ENCODE measurements at regions of chr7 and their contacts with region 1.

Region 1: GRCh38 chr7:150448789-150449147 is 1.7 kb upstream of the GIMAP8 start:
- DNase-seq: peak; percentile 65
- H3K4me3 ChIP-seq: no peak overlapping the region
- H3K27ac ChIP-seq: no peak overlapping the region
- H3K4me1 ChIP-seq: no peaks in the 10 kb centered on the region
- CTCF ChIP-seq: peak; percentile 93

Region 2: DNA sequence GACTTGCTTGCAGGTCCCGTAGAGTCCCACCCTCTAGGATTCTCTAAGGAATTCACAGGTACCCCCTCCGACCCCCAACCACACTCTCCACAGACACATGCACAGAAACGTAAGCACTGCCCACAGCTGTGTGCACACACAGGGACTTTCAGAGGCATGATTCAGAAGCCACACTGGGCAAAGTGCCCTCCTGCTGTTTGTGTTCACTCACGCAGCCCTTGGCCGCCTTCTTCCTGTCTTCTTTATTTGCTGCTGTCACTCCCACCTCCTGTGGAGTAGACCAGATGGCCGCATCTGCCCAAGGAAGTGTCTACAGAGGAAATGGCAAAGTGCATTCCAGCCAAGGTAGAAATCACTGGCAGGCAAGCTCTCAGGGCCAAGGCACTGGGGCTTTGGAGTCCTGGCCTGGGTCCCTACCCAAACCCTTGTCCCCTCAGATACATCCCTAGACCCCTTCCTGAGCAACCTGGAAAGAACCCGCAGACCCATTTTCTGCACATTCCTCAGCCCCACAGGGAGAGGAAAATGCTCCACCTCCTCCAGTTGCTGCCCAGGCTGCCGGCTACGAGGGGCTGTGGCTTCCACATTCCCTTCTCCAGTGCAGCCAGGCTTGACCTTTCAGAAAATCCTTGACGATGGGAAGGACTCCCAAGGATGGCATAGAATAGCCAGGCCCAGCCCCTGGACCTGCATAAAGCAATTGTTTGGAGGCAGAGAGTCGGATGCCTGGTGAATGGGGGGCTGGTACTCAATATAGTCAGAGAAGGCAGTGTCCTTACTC is 19.9 kb before region 1 on chr7:
- CTCF ChIA-PET with region 1: no interaction called
- POLR2A ChIA-PET with region 1: no interaction called
- intact Hi-C with region 1: no loop called
- DNase-seq: no peak
- H3K4me3 ChIP-seq: no peak overlapping the region
- H3K27ac ChIP-seq: no peak overlapping the region
- H3K4me1 ChIP-seq: no peaks in the 10 kb centered on the region
- CTCF ChIP-seq: no peak

Region 3: DNA sequence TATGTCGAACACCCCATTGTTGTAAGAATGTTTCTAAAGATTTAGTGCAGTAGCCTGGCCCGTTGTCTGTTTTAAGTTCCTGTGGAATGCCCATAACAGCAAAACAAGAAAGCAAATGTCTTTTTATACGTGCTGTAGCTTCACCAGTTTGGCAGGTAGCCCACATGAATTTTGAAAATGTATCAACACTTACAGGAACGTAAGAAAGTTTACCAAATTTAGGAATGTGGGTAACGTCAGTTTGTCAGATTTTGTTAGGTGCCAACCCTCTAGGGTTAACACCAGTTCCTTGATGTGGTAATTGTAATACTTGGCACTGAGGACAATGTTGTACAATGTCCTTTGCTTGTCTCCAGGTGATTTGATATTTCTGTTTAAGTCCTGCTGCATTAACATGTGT is 115.2 kb after region 1 on chr7:
- CTCF ChIA-PET with region 1: no interaction called
- POLR2A ChIA-PET with region 1: no interaction called
- intact Hi-C with region 1: loop called (anchors 5 kb)
- DNase-seq: no peak
- H3K4me3 ChIP-seq: no peak overlapping the region
- H3K27ac ChIP-seq: no peak overlapping the region
- H3K4me1 ChIP-seq: no peaks in the 10 kb centered on the region
- CTCF ChIP-seq: no peak

Region 4: GRCh38 chr7:150756858-150757257 is 308.1 kb after region 1 on chr7:
- CTCF ChIA-PET with region 1: no interaction called
- POLR2A ChIA-PET with region 1: no interaction called
- intact Hi-C with region 1: loop called (anchors 5 kb)
- DNase-seq: no peak
- H3K4me3 ChIP-seq: no peak overlapping the region
- H3K27ac ChIP-seq: no peak overlapping the region
- H3K4me1 ChIP-seq: no peaks in the 10 kb centered on the region
- CTCF ChIP-seq: peak; percentile 66

Measured in OCI-LY7 (cell line).